Caco-2 (cell line): ENCODE measurements at regions of chr1 and their contacts with region 1.

Region 1: GRCh38 chr1:114467488-114467887 is 43.5 kb downstream of the TRIM33 start:
- DNase-seq: no peak
- H3K4me3 ChIP-seq: no peak overlapping the region
- H3K4me3 Mint-ChIP-seq: no peak overlapping the region
- H3K27ac Mint-ChIP-seq: peak overlapping the region; percentile 65
- H3K4me1 ChIP-seq: peaks cover 28% of the 10 kb centered on the region
- H3K4me1 Mint-ChIP-seq: peaks cover 30% of the 10 kb centered on the region
- H3K27me3 ChIP-seq: no peaks in the 10 kb centered on the region
- H3K27me3 Mint-ChIP-seq: no peaks in the 10 kb centered on the region
- CTCF ChIP-seq: no peak

Region 2: GRCh38 chr1:114443977-114444376 is 23.5 kb before region 1 on chr1:
- CTCF ChIA-PET with region 1: no interaction called
- POLR2A ChIA-PET with region 1: no interaction called
- intact Hi-C with region 1: no loop called
- DNase-seq: no peak
- H3K4me3 ChIP-seq: no peak overlapping the region
- H3K4me3 Mint-ChIP-seq: no peak overlapping the region
- H3K27ac Mint-ChIP-seq: no peak overlapping the region
- H3K4me1 ChIP-seq: no peaks in the 10 kb centered on the region
- H3K4me1 Mint-ChIP-seq: peaks cover 5% of the 10 kb centered on the region
- H3K27me3 ChIP-seq: no peaks in the 10 kb centered on the region
- H3K27me3 Mint-ChIP-seq: no peaks in the 10 kb centered on the region
- CTCF ChIP-seq: no peak

Region 3: GRCh38 chr1:114455102-114455785 is 12.2 kb before region 1 on chr1:
- CTCF ChIA-PET with region 1: interaction called, 3 read pairs
- POLR2A ChIA-PET with region 1: no interaction called
- intact Hi-C with region 1: loop called (anchors 1 kb)
- DNase-seq: no peak
- H3K4me3 ChIP-seq: no peak overlapping the region
- H3K4me3 Mint-ChIP-seq: no peak overlapping the region
- H3K27ac Mint-ChIP-seq: no peak overlapping the region
- H3K4me1 ChIP-seq: peaks cover 40% of the 10 kb centered on the region
- H3K4me1 Mint-ChIP-seq: peaks cover 18% of the 10 kb centered on the region
- H3K27me3 ChIP-seq: no peaks in the 10 kb centered on the region
- H3K27me3 Mint-ChIP-seq: no peaks in the 10 kb centered on the region
- CTCF ChIP-seq: no peak

Region 4: GRCh38 chr1:114511032-114511785 is 43.7 kb after region 1 on chr1 and contains the start of gene TRIM33:
- CTCF ChIA-PET with region 1: no interaction called
- POLR2A ChIA-PET with region 1: no interaction called
- intact Hi-C with region 1: loop called (anchors 5 kb)
- DNase-seq: peak; percentile 86 to 89
- H3K4me3 ChIP-seq: peak within 1 kb of the TSS; percentile 51
- H3K4me3 Mint-ChIP-seq: peak within 1 kb of the TSS; percentile 81
- H3K27ac Mint-ChIP-seq: peak within 1 kb of the TSS; percentile 95
- H3K4me1 ChIP-seq: peaks cover 11% of the 10 kb centered on the region; the same call in 1 of the 2 replicates
- H3K4me1 Mint-ChIP-seq: peaks cover 28% of the 10 kb centered on the region
- H3K27me3 ChIP-seq: no peaks in the 10 kb centered on the region
- H3K27me3 Mint-ChIP-seq: no peaks in the 10 kb centered on the region
- CTCF ChIP-seq: no peak
- total RNA-seq, gene TRIM33: 28.7 and 30.4 TPM in 2 replicates